A549 (cell line): ENCODE measurements at regions of chr17 and their contacts with region 1.

Region 1: GRCh38 chr17:44522883-44523671 is 19.9 kb upstream of the GPATCH8 start:
- DNase-seq: peak; percentile 84
- ATAC-seq: peak; percentile 97 to 99
- H3K4me3 ChIP-seq: no peak overlapping the region
- H3K27ac ChIP-seq: peak overlapping the region in 1 of 2 experiments; percentile 10; a peak in 1 of 6 replicates
- H3K4me1 ChIP-seq: peaks cover 2% of the 10 kb centered on the region; the same call in 1 of the 3 replicates
- CTCF ChIP-seq: peak; percentile 73
- EP300 ChIP-seq: no peak
- POLR2A ChIP-seq: no peak
- RAD21 ChIP-seq: peak; percentile 81 to 91

Region 2: DNA sequence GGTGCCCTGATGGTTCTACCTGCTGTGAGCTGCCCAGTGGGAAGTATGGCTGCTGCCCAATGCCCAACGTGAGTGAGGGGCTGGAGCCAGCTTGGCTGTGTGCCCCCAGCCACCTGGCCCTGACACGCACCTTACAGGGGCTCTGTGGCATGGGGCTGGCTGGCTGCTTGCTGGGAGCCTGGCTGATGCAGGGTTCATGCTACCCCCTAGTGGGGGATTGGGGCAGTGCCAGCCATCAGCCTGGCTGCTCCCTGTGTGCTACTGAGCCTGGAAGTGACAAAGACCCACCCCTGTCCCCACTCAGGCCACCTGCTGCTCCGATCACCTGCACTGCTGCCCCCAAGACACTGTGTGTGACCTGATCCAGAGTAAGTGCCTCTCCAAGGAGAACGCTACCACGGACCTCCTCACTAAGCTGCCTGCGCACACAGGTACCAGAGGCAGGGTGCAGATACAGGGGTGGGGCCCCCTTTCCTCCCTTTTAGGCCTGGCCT is 172.3 kb before region 1 on chr17:
- CTCF ChIA-PET with region 1: interaction called, 17 read pairs
- POLR2A ChIA-PET with region 1: interaction called, 3 read pairs
- DNase-seq: peak; percentile 73 to 96
- ATAC-seq: peak; percentile 78 to 92
- H3K4me3 ChIP-seq: no peak overlapping the region
- H3K27ac ChIP-seq: no peak overlapping the region
- H3K4me1 ChIP-seq: peaks cover 6% of the 10 kb centered on the region
- CTCF ChIP-seq: peak; percentile 81
- EP300 ChIP-seq: no peak
- POLR2A ChIP-seq: no peak
- RAD21 ChIP-seq: peak; percentile 75 to 85

Region 3: GRCh38 chr17:44376124-44376523 is 147.0 kb before region 1 on chr17:
- CTCF ChIA-PET with region 1: interaction called, 11 read pairs
- POLR2A ChIA-PET with region 1: no interaction called
- DNase-seq: peak in 1 of 2 experiments; percentile 80
- ATAC-seq: peak; percentile 36 to 82; a peak in 4 of 6 replicates
- H3K4me3 ChIP-seq: no peak overlapping the region
- H3K27ac ChIP-seq: no peak overlapping the region
- H3K4me1 ChIP-seq: no peaks in the 10 kb centered on the region
- CTCF ChIP-seq: peak; percentile 38; the same call in 2 of the 3 replicates
- EP300 ChIP-seq: no peak
- POLR2A ChIP-seq: no peak
- RAD21 ChIP-seq: no peak

Region 4: DNA sequence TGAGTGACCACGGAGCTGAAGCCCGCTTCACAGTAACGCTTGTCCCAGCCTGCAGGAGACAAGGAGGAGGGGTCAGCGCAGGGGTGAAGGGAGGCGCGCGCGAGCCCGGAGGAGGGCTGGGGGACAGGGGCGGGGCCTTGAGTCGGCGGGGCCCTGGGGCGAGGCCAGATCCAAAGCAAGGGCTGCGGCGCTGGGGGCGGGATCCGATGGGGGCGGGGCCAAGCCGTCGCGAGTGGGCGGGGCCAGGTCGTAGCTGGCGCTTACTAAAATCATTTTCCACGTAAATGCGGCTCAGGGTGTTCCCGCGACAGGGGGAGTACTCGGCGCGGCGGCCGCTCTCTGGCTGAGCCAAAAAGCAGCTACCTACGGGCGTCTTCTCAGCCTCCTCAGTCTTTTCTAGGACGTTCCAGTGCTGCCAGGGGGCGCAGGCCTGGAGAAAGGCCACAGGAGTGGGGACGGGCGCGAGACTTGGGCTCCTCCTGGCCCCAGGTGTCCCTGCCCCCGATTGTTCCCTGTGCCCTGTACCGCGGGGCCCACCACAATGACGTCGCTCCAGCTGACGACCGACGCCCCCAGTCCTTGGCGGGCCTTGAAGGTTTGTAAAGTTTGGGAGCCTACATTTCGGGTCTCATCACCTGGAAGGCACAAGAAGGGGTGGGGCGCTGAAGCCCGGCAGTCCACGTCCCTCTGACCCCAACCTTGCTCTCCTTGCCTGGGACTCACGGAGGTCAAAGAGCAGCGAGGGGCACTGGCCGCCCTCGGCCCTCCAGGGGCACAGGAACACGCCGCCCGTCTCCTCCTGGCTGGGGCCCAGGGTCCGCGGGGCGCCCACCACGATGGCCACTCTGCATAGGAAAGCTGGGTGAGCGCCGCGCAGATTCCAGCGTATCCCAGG is 137.5 kb before region 1 on chr17:
- CTCF ChIA-PET with region 1: interaction called, 19 read pairs
- POLR2A ChIA-PET with region 1: no interaction called
- DNase-seq: peak; percentile 86 to 88
- ATAC-seq: peak; percentile 73 to 91
- H3K4me3 ChIP-seq: peak overlapping the region; percentile 54
- H3K27ac ChIP-seq: peak overlapping the region; percentile 73 to 86
- H3K4me1 ChIP-seq: peaks cover 3% of the 10 kb centered on the region; the same call in 1 of the 3 replicates
- CTCF ChIP-seq: peak; percentile 31; the same call in 2 of the 3 replicates
- EP300 ChIP-seq: no peak
- POLR2A ChIP-seq: peak; percentile 31
- RAD21 ChIP-seq: peak in 1 of 2 experiments; percentile 26; a peak in 2 of 5 replicates

Region 5: DNA sequence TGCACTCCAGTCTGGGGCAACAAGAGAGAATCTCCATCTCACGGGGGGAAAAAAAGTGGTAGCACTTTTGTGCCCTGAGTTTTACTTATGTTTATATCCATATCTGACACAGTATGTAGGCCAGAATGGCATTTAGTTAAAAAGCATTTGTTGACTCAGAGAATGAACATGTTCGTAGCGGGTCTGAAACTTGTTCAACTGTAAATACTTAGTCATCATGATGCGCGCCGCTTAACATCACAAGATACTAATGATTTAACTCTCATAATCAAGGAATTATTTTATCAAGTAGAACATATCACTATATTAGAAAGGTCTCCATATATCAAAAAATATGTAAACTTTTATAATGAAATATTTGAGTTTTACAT is 78.4 kb before region 1 on chr17:
- CTCF ChIA-PET with region 1: interaction called, 15 read pairs
- POLR2A ChIA-PET with region 1: no interaction called
- DNase-seq: peak in 1 of 2 experiments; percentile 65
- ATAC-seq: peak; percentile 56 to 74; a peak in 5 of 6 replicates
- H3K4me3 ChIP-seq: no peak overlapping the region
- H3K27ac ChIP-seq: peak overlapping the region; percentile 65 to 82
- H3K4me1 ChIP-seq: peaks cover 20% of the 10 kb centered on the region
- CTCF ChIP-seq: no peak
- EP300 ChIP-seq: no peak
- POLR2A ChIP-seq: no peak
- RAD21 ChIP-seq: no peak

Region 6: DNA sequence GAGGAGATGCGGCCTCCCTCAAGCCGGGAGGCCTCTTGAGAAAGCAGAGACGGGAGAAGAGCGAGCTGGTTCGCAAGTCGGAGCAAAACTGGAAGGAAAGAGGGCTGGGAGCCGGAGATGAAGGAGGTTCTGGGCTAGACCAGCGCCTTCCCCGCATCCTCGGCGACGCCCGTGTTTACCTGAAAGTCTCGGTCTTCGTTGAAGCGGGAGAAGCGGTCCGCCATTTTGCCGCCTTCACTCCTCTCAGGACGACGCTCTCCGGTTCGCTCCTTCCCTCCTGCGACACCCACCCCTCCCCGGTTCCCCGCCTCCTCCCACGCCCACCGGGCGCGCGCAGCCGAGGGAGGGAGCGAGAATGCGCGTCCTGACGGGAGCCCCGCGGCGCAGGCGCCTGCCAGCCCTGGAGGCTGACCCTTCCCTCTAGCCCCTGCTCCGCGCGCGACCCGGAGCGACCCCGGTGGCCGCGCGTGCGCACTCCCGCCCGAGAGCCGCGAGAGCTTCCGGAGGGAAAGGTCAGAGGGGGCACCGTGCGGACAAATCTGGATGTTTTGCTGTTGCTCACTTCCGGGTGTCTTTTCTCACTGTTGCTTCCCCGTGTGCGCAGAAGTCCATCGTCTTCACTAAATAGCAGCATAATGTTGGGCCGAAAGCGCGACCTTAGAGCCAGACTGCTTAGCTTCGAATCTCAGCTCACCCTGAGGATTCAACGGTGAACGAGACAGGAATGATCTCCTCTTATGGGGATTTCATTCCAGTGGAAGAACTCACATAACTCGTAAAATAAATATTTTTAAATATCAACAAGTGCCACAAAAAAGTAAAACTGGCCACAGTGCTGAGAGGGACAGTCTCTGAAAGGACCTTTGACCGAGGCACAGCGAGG is 19.7 kb before region 1 on chr17 and contains the start of gene GPATCH8:
- CTCF ChIA-PET with region 1: interaction called, 10 read pairs
- POLR2A ChIA-PET with region 1: interaction called, 11 read pairs
- DNase-seq: peak; percentile 99
- ATAC-seq: peak; percentile 95 to 98
- H3K4me3 ChIP-seq: peak within 1 kb of the TSS; percentile 80
- H3K27ac ChIP-seq: peak within 1 kb of the TSS; percentile 85 to 95
- H3K4me1 ChIP-seq: peaks cover 38% of the 10 kb centered on the region; the same call in 2 of the 3 replicates
- CTCF ChIP-seq: no peak
- EP300 ChIP-seq: no peak
- POLR2A ChIP-seq: peak; percentile 77
- RAD21 ChIP-seq: no peak
- polyA plus RNA-seq, gene GPATCH8: 24.9 and 27.3 TPM in 2 replicates

Region 7: GRCh38 chr17:44595216-44595775 is 72.2 kb after region 1 on chr17:
- CTCF ChIA-PET with region 1: no interaction called
- POLR2A ChIA-PET with region 1: no interaction called
- DNase-seq: no peak
- ATAC-seq: no peak
- H3K4me3 ChIP-seq: no peak overlapping the region
- H3K27ac ChIP-seq: peak overlapping the region in 1 of 2 experiments; percentile 27; a peak in 2 of 6 replicates
- H3K4me1 ChIP-seq: peaks cover 23% of the 10 kb centered on the region
- CTCF ChIP-seq: no peak
- EP300 ChIP-seq: no peak
- POLR2A ChIP-seq: no peak
- RAD21 ChIP-seq: no peak

Region 8: DNA sequence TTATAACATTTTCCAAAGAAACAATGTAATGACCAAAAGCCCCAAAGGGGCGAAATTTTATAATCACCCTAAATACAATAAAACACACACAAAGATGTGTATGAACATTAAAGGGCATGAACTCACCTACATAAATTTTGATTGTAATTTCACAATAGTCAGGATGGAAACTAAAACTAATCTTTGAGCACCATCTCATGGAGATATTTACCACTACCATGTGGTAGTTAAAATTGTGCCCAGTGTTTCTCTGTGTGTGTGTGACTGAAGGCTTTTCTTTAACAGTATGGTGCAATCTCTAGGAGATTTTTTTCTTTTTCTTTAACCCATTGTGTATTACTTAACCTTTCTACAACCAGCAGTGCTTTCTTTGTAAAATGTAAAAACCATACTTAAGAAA is 113.5 kb after region 1 on chr17:
- CTCF ChIA-PET with region 1: interaction called, 181 read pairs
- POLR2A ChIA-PET with region 1: no interaction called
- DNase-seq: peak; percentile 67 to 69
- ATAC-seq: peak; percentile 88 to 94
- H3K4me3 ChIP-seq: no peak overlapping the region
- H3K27ac ChIP-seq: peak overlapping the region in 1 of 2 experiments; percentile 1; a peak in 1 of 6 replicates
- H3K4me1 ChIP-seq: peaks cover 22% of the 10 kb centered on the region
- CTCF ChIP-seq: peak; percentile 97
- EP300 ChIP-seq: no peak
- POLR2A ChIP-seq: no peak
- RAD21 ChIP-seq: peak; percentile 99